ENCODE measurements at regions of chr18 and their contacts with region 1.

Region 1: GRCh38 chr18:4813708-4814107 is 358.6 kb upstream of the DLGAP1 start:
- DNase-seq: no peak
- H3K4me3 ChIP-seq: no peak overlapping the region
- H3K27ac ChIP-seq: no peak overlapping the region
- H3K4me1 ChIP-seq: no peaks in the 10 kb centered on the region
- H3K27me3 ChIP-seq: peaks cover 6% of the 10 kb centered on the region
- CTCF ChIP-seq: no peak

Region 2: GRCh38 chr18:4870177-4870773 is 56.6 kb after region 1 on chr18:
- CTCF ChIA-PET with region 1: no interaction called
- POLR2A ChIA-PET with region 1: no interaction called
- intact Hi-C with region 1: loop called (anchors 2 kb)
- DNase-seq: no peak
- H3K4me3 ChIP-seq: no peak overlapping the region
- H3K27ac ChIP-seq: no peak overlapping the region
- H3K4me1 ChIP-seq: no peaks in the 10 kb centered on the region
- H3K27me3 ChIP-seq: peaks cover 4% of the 10 kb centered on the region
- CTCF ChIP-seq: no peak

Region 3: DNA sequence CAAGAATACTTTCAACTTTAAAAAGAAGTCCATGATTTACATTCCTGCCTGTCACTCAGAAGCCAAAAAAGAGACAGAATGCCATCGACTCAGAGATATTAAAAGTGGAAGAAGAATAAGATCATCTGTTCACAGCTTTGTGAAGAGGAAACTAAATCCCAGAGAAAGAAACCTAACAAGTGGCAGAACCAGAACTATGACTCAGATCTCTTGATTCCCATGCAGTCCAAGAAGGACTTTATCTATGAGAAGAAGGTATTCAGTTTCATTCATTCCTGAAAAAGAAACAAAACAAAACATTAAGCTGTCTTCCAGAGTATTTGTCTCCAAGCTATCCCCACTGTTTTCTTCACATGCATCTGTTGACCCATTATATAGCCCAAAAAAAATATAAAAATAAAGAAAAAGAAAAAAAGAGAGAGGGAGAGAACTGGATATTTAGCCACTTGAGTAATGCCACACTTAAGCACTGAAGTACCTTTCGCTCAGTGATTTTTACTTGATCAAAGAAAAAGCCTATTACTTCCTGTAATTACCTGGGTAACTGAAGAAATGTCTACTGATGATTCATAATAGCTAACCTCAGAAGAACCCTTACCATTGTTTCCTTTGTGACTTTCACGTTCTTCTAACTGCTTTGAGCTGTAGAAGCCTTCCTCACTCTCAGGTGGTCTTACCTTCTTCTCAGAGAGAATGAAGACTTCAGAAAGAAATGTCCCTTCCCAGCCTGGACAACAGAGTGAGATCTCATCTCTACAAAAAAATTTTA is 401.1 kb after region 1 on chr18:
- CTCF ChIA-PET with region 1: no interaction called
- POLR2A ChIA-PET with region 1: no interaction called
- intact Hi-C with region 1: no loop called
- DNase-seq: no peak
- H3K4me3 ChIP-seq: no peak overlapping the region
- H3K27ac ChIP-seq: no peak overlapping the region
- H3K4me1 ChIP-seq: no peaks in the 10 kb centered on the region
- H3K27me3 ChIP-seq: peaks cover 64% of the 10 kb centered on the region
- CTCF ChIP-seq: no peak

Measured in A673 (cell line).